Activated CD8-positive, alpha-beta T cell treated with anti-CD3 and anti-CD28 coated beads for 36 hours (primary cell): ENCODE measurements at regions of chr16 and their contacts with region 1.

Region 1: GRCh38 chr16:30628627-30629540 is 18.7 kb upstream of the ZNF689 start:
- DNase-seq: peak; percentile 95
- ATAC-seq: peak; percentile 97
- H3K4me3 Mint-ChIP-seq: peak overlapping the region; percentile 57
- H3K27ac Mint-ChIP-seq: peak overlapping the region; percentile 72
- H3K4me1 Mint-ChIP-seq: peaks cover 4% of the 10 kb centered on the region
- H3K27me3 Mint-ChIP-seq: no peaks in the 10 kb centered on the region
- CTCF ChIP-seq: peak; percentile 88

Region 2: DNA sequence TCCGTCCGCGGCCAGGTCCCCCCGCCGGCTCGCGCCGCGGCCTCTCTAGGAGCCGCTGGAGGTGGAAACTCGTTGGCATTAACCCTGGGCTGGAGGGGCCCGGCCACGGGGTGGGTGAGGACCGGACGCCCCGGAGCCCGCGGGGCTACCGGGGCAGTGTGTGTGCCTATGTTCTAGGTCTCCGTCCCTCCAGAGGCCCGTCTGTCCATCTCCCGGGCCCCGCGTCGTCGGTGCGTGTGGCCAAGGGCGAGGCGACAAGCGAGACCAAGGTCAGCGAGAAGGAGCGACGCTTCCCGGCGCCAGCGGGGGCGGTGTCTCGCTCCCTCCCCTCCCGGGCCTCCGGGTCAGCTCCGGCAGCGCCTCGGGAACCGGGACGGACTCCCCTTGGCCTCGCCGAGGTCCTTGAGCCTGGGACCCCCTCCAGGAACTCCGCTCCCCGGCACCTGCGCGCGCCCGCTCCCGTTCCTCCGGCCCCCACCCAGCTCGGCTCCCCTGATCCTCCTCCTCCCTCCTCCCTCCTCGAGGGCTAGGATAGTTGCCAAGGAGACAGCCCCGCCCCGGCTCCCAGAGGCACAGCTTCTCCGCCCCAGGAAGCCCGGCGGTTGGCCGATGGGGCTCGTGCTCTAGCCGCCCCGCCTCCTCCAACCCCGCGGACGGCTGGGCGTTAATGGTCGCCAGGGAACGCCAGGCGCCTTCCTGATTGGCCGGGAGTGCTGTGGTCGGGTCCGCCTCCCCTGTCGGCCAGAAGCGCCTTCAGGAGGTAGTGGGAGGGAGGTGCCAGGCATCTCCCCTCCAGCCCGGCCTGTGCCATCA is 101.9 kb before region 1 on chr16:
- CTCF ChIA-PET with region 1: no interaction called
- POLR2A ChIA-PET with region 1: no interaction called
- intact Hi-C with region 1: no loop called
- DNase-seq: peak; percentile 98
- ATAC-seq: peak; percentile 92
- H3K4me3 Mint-ChIP-seq: peak overlapping the region; percentile 74
- H3K27ac Mint-ChIP-seq: peak overlapping the region; percentile 67
- H3K4me1 Mint-ChIP-seq: peaks cover 33% of the 10 kb centered on the region
- H3K27me3 Mint-ChIP-seq: no peaks in the 10 kb centered on the region
- CTCF ChIP-seq: no peak

Region 3: GRCh38 chr16:30609926-30610839 is 18.7 kb before region 1 on chr16 and contains the start of gene ZNF689:
- CTCF ChIA-PET with region 1: interaction called, 61 read pairs
- POLR2A ChIA-PET with region 1: interaction called, 4 read pairs
- intact Hi-C with region 1: no loop called
- DNase-seq: peak; percentile 96
- ATAC-seq: peak; percentile 86
- H3K4me3 Mint-ChIP-seq: peak within 1 kb of the TSS; percentile 89
- H3K27ac Mint-ChIP-seq: peak within 1 kb of the TSS; percentile 93
- H3K4me1 Mint-ChIP-seq: peaks cover 15% of the 10 kb centered on the region
- H3K27me3 Mint-ChIP-seq: no peaks in the 10 kb centered on the region
- CTCF ChIP-seq: no peak
- total RNA-seq, gene ZNF689: 9.8 to 11.3 TPM

Region 4: DNA sequence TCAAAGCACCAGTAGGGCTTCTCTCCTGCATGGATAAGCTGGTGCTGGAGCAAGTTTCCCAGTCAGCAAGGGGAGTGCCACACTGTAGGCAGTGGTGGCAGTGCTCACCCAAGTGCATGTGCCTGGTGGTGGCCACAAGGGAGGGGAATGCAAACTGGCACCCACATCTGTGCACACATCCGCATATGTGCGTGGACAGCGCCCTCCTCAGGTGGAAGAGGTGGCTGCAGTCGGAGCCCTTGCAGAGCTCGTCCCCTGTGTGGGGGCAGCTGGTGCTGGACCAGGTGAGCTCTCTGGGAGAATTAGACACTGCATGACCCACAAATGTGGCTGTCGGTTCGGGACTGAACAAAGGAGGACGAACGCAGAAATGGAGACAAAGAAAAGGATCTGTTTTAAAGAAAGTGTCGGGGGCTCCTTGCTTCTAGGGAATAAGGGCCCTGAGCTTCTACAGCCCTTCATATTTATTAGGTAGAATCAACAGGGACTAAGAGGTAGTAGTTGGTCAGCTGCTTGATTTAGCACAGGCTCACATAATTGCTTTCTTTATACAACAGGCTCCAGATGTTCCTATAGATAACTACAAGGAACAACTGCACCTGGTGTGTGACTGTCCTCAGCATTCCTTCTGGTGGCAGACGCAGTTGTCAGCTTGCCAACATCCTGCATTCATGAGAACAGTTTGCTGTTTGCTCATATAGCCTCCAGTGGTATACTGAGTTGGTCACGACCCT is 13.4 kb before region 1 on chr16:
- CTCF ChIA-PET with region 1: interaction called, 61 read pairs
- POLR2A ChIA-PET with region 1: interaction called, 4 read pairs
- intact Hi-C with region 1: no loop called
- DNase-seq: peak; percentile 94
- ATAC-seq: peak; percentile 90
- H3K4me3 Mint-ChIP-seq: no peak overlapping the region
- H3K27ac Mint-ChIP-seq: no peak overlapping the region
- H3K4me1 Mint-ChIP-seq: peaks cover 1% of the 10 kb centered on the region
- H3K27me3 Mint-ChIP-seq: no peaks in the 10 kb centered on the region
- CTCF ChIP-seq: peak; percentile 90

Region 5: DNA sequence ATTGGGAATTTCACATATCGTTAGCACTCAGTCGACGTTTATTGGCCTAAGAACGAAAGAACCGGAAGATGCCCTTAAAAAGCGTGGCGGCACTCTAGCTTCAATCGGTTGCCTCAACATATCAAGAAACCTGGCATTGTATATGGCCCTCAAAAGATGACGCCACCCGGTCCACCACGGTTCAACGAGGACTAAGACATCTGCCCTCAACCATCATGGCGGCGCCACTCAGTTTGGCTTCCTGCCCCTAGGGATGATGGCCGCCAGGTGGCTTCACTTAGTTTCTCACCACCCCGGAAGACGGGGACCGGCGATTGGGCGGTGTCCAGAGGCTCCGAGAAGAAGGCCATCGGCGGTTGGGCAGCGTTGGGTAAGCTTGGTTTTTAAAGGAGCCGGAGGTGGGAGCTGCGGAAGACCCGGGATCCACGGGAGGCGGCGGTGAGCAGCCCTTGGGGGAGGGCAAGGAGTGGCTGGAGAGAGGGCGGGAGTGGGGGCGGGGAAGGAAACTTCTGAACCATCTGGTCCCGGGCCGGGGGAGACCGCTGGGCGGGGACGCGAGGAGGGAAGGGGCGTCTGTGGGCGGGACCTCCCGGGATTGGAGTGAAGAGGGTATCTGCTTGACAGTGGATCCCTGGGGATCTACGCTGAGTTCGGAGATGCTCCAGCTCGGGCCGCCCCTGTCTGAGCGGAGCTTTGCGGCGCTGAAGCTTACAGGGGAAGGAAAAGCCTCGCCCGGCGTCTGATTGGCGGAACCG is 21.7 kb after region 1 on chr16 and contains the start of gene PRR14:
- CTCF ChIA-PET with region 1: interaction called, 8 read pairs
- POLR2A ChIA-PET with region 1: interaction called, 12 read pairs
- intact Hi-C with region 1: loop called (anchors 2 kb)
- DNase-seq: peak; percentile 100
- ATAC-seq: peak; percentile 82
- H3K4me3 Mint-ChIP-seq: peak within 1 kb of the TSS; percentile 88
- H3K27ac Mint-ChIP-seq: peak within 1 kb of the TSS; percentile 91
- H3K4me1 Mint-ChIP-seq: peaks cover 27% of the 10 kb centered on the region
- H3K27me3 Mint-ChIP-seq: no peaks in the 10 kb centered on the region
- CTCF ChIP-seq: no peak
- total RNA-seq, gene PRR14: 74.0 to 76.6 TPM

Region 6: GRCh38 chr16:30675143-30675542 is 46.3 kb after region 1 on chr16:
- CTCF ChIA-PET with region 1: no interaction called
- POLR2A ChIA-PET with region 1: no interaction called
- intact Hi-C with region 1: no loop called
- DNase-seq: no peak
- ATAC-seq: no peak
- H3K4me3 Mint-ChIP-seq: no peak overlapping the region
- H3K27ac Mint-ChIP-seq: no peak overlapping the region
- H3K4me1 Mint-ChIP-seq: no peaks in the 10 kb centered on the region
- H3K27me3 Mint-ChIP-seq: no peaks in the 10 kb centered on the region
- CTCF ChIP-seq: no peak

Region 7: GRCh38 chr16:30775392-30776188 is 146.7 kb after region 1 on chr16:
- CTCF ChIA-PET with region 1: no interaction called
- POLR2A ChIA-PET with region 1: no interaction called
- intact Hi-C with region 1: no loop called
- DNase-seq: peak; percentile 80
- ATAC-seq: peak; percentile 84
- H3K4me3 Mint-ChIP-seq: peak overlapping the region; percentile 80
- H3K27ac Mint-ChIP-seq: peak overlapping the region; percentile 93
- H3K4me1 Mint-ChIP-seq: peaks cover 22% of the 10 kb centered on the region
- H3K27me3 Mint-ChIP-seq: no peaks in the 10 kb centered on the region
- CTCF ChIP-seq: no peak